Caco-2 (cell line): ENCODE measurements at regions of chr19 and their contacts with region 1.

Region 1: DNA sequence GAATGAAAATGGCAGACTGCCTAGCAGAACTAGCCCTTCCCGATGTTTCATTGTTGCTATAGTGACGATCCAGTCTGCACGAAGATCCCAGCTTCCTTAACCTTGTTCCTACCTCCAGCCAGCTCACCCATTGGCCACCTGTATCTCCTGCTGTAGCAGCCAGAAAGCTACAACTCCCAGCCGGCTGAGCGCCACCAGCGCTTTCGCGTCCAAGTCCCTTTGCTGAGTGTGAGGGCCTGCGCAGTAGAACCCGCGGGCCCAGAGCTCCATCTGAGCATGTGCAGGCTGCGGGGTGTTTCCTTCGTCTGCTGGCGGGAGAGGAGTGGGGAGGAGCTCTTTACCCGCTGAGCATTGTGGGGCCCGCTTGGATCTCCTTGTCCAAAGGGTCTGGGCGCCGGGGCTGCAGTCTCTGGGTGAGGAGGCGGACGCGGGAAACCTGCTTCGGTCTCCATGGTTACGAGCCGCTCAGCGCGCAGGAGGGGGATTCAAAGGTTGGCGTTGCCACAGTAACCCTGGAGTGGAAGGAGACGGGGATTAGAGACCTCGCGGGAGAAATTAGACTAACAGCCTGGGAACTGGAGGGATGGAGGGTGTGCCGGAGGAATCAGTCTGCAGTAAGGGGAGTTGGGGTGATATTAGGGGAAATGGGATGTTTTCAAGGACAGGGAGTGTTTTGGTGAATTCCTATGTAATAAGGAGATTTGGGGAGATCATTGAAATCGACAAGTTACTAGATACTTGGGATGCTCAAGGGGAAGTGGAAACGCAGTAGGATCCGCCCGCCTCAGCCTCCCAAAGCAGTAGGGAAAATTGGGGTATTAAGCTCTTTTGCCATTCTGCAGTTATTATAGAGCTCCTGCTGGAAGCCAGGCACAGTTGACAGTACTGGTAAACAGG is 33.5 kb downstream of the ZSWIM9 start:
- DNase-seq: peak; percentile 97 to 98
- H3K4me3 ChIP-seq: peak overlapping the region; percentile 67
- H3K4me3 Mint-ChIP-seq: no peak overlapping the region
- H3K27ac Mint-ChIP-seq: no peak overlapping the region
- H3K4me1 ChIP-seq: no peaks in the 10 kb centered on the region
- H3K4me1 Mint-ChIP-seq: no peaks in the 10 kb centered on the region
- H3K27me3 ChIP-seq: no peaks in the 10 kb centered on the region
- H3K27me3 Mint-ChIP-seq: no peaks in the 10 kb centered on the region
- CTCF ChIP-seq: no peak

Region 2: GRCh38 chr19:48190288-48190884 is 13.6 kb before region 1 on chr19:
- CTCF ChIA-PET with region 1: interaction called, 45 read pairs
- POLR2A ChIA-PET with region 1: interaction called, 15 read pairs
- intact Hi-C with region 1: loop called (anchors 1 kb)
- DNase-seq: peak; percentile 93 to 95
- H3K4me3 ChIP-seq: no peak overlapping the region
- H3K4me3 Mint-ChIP-seq: peak overlapping the region; percentile 35
- H3K27ac Mint-ChIP-seq: no peak overlapping the region
- H3K4me1 ChIP-seq: peaks cover 3% of the 10 kb centered on the region; the same call in 1 of the 2 replicates
- H3K4me1 Mint-ChIP-seq: no peaks in the 10 kb centered on the region
- H3K27me3 ChIP-seq: no peaks in the 10 kb centered on the region
- H3K27me3 Mint-ChIP-seq: no peaks in the 10 kb centered on the region
- CTCF ChIP-seq: peak; percentile 65 to 77

Region 3: DNA sequence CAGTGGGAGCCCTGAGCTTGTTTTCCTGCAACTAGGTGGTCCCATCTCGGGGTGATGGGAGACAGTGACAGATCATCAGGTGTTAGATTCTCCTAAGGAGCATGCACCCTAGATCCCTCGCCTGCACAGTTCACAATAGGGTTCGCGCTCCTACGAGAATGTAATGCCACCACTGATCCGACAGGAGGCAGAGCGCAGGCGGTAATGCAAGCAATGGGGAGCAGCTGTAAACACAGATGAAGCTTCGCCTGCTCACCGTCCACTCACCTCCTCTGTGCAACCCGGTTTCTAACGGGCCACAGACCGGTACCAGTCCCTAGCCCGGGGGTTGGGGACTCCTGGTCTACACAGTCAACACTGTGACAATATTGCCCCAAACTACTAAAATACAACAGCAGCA is 13.0 kb after region 1 on chr19:
- CTCF ChIA-PET with region 1: interaction called, 12 read pairs
- POLR2A ChIA-PET with region 1: interaction called, 4 read pairs
- intact Hi-C with region 1: no loop called
- DNase-seq: no peak
- H3K4me3 ChIP-seq: no peak overlapping the region
- H3K4me3 Mint-ChIP-seq: no peak overlapping the region
- H3K27ac Mint-ChIP-seq: no peak overlapping the region
- H3K4me1 ChIP-seq: no peaks in the 10 kb centered on the region
- H3K4me1 Mint-ChIP-seq: no peaks in the 10 kb centered on the region
- H3K27me3 ChIP-seq: no peaks in the 10 kb centered on the region
- H3K27me3 Mint-ChIP-seq: no peaks in the 10 kb centered on the region
- CTCF ChIP-seq: no peak

Region 4: GRCh38 chr19:48255376-48256303 is 51.7 kb after region 1 on chr19 and contains the start of gene CARD8:
- CTCF ChIA-PET with region 1: interaction called, 15 read pairs
- POLR2A ChIA-PET with region 1: interaction called, 21 read pairs
- intact Hi-C with region 1: loop called (anchors 1 kb)
- DNase-seq: peak; percentile 84 to 88
- H3K4me3 ChIP-seq: peak within 1 kb of the TSS; percentile 63
- H3K4me3 Mint-ChIP-seq: peak within 1 kb of the TSS; percentile 95
- H3K27ac Mint-ChIP-seq: peak within 1 kb of the TSS; percentile 96
- H3K4me1 ChIP-seq: peaks cover 7% of the 10 kb centered on the region; the same call in 1 of the 2 replicates
- H3K4me1 Mint-ChIP-seq: peaks cover 6% of the 10 kb centered on the region
- H3K27me3 ChIP-seq: no peaks in the 10 kb centered on the region
- H3K27me3 Mint-ChIP-seq: no peaks in the 10 kb centered on the region
- CTCF ChIP-seq: no peak
- total RNA-seq, gene CARD8: 17.7 and 19.9 TPM in 2 replicates